ENCODE measurements at regions of chr12 and their contacts with region 1.

Region 1: DNA sequence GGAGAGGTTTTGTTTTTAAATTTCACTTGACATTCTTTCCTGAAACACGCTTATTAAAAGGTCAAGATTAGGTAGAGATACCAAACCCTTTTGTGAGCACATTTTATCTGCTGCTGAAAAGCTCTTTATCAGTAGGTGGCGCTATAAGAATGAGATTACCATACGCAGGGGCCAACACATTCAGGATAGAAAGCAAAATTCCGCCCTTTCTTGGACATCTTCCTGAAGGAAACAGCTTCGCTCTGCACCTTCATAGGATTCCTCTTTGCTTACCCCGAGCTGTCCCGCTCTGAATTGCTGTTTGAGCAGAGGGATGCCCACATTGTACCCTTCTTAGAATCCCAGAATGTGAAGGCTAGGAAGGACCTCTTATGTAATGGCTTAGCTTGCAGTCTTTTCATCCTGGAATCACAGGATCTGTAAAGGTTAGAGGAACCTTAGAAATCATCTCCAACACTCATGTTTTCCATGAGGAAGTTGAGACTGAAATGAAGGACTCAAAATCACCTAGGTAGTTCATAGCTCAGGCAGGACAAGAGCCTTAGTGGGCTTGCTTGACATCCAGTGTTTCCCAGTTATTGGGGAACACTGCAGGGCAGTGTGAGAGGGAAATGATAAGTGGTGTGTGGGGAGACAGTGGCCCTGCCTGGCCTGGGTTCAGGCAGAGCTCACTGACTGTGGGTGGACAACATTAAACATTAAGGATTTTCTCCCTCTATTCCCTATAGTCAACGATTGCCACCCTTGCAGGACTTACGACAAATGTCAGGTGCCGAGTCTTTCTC is 38.7 kb upstream of the CRY1 start:
- DNase-seq: peak; percentile 4
- H3K4me3 ChIP-seq: no peak overlapping the region
- CTCF ChIP-seq: peak; percentile 67

Region 2: DNA sequence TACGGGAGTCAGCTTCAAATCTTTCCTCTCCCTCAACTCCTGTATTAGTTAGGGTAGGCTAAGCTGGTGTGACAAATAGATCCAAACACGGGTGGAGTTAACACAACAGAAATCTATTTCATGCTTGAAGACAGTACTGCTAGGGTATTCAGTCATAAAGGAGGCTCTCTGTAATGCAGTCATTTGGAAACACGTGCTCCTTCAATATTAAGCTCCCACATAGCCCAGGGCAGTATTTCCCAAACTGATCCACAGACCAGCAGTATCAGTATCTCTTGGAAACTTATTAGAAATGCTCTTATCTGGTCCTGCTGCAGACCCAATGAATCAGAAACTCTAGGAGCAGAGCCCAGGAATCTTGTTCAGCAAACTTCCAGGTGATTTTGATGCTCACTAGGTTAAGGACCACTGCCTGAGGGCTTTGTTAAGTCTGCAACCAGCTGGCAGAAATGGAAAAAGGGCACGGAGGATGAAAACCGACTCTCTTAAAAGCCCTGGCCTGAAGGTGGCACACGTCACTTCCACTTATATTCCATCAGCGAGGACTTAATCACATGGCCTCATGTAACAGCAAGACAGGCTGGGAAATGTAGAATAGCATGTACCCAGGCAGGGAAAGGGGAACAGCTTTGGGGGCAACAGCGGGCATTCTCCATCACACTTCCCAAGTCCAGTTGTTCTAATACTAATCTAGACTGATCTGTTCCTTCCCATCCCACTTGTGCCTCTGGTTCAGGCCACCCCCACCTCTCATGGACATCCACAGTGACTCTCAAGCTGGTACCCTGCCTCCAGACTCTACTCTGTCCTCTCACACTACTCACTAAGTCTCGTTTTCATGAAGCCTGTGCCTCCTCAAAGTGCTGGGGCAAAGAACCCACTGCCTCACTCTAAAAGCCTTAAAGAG is 395.7 kb before region 1 on chr12:
- CTCF ChIA-PET with region 1: no interaction called
- POLR2A ChIA-PET with region 1: no interaction called
- DNase-seq: no peak
- H3K4me3 ChIP-seq: no peak overlapping the region
- CTCF ChIP-seq: no peak

Region 3: GRCh38 chr12:107105410-107105703 is 26.7 kb before region 1 on chr12:
- CTCF ChIA-PET with region 1: interaction called, 23 read pairs
- POLR2A ChIA-PET with region 1: no interaction called
- DNase-seq: no peak
- H3K4me3 ChIP-seq: no peak overlapping the region
- CTCF ChIP-seq: no peak

Region 4: GRCh38 chr12:107145397-107145796 is 13.4 kb after region 1 on chr12:
- CTCF ChIA-PET with region 1: interaction called, 47 read pairs
- POLR2A ChIA-PET with region 1: no interaction called
- DNase-seq: no peak
- H3K4me3 ChIP-seq: no peak overlapping the region
- CTCF ChIP-seq: no peak

Region 5: DNA sequence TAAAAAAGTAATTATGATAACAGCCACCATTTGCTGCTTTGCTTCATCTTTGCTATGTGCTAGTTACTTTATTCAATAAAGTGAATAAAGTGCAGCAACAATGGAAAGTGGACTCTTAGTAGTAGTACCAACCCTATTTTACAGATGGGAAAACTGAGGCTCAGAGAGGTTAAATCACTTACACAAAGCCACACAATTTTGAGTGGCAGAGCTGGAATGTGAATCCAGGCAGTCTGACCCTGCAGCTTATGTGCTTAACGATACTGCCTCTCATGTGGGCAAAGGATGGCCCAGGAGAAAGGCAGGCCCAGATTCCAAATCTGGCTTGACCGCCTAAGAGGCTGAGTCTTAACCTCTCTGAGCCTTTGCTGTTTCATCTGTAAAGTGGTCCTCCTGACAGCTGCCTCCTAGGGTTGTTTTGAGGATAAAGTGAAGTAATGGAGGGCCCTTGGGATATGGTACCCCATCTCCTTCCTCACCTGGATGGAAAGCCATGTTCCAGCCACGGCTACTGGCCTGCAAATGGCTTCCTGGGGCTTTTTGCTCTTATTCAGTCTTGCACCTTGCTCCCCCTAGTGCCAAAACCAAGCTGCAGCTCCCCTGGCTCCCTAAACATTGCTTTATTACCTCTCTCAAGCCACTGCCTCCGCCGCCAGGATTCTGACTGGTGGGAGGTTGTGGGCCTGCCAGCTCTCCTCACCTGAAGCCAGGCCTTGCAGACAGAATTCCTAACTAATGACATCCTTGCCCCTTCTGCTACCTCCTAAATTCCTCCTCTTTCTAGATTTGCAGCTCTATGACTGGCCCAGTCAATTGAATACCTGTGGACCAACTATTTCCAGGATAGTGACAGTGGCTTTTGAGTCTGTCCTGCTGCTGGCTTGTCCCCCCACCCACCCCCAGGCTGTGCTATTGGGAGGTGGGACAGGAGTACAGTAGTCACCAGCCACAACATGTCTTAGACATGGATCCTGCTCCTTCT is 270.3 kb after region 1 on chr12:
- CTCF ChIA-PET with region 1: interaction called, 403 read pairs
- POLR2A ChIA-PET with region 1: no interaction called
- DNase-seq: no peak
- H3K4me3 ChIP-seq: no peak overlapping the region
- CTCF ChIP-seq: peak; percentile 74

Region 6: DNA sequence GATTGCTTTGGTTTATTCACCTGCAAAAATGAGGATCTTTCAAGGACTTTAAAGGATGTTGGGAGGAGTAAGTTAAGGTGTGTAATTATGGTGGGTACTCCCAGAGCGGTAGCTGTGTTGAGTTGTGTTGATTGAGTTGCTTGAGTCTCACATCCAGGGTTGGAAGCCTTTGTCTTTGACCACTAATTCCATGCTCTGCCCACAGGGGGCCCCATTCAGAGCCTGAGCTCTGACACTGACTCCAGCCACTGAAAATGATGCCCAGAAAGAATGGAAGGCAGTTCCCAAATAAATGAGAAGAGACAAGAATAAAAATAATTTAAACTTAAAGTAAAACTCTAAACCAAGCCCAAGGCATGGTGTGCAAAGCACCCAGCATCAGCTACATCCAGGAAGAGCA is 316.2 kb after region 1 on chr12:
- CTCF ChIA-PET with region 1: interaction called, 12 read pairs
- POLR2A ChIA-PET with region 1: no interaction called
- DNase-seq: no peak
- H3K4me3 ChIP-seq: no peak overlapping the region
- CTCF ChIP-seq: peak; percentile 36

Region 7: GRCh38 chr12:107593713-107594381 is 461.8 kb after region 1 on chr12:
- CTCF ChIA-PET with region 1: interaction called, 24 read pairs
- POLR2A ChIA-PET with region 1: no interaction called
- DNase-seq: no peak
- H3K4me3 ChIP-seq: no peak overlapping the region
- CTCF ChIP-seq: no peak

Region 8: DNA sequence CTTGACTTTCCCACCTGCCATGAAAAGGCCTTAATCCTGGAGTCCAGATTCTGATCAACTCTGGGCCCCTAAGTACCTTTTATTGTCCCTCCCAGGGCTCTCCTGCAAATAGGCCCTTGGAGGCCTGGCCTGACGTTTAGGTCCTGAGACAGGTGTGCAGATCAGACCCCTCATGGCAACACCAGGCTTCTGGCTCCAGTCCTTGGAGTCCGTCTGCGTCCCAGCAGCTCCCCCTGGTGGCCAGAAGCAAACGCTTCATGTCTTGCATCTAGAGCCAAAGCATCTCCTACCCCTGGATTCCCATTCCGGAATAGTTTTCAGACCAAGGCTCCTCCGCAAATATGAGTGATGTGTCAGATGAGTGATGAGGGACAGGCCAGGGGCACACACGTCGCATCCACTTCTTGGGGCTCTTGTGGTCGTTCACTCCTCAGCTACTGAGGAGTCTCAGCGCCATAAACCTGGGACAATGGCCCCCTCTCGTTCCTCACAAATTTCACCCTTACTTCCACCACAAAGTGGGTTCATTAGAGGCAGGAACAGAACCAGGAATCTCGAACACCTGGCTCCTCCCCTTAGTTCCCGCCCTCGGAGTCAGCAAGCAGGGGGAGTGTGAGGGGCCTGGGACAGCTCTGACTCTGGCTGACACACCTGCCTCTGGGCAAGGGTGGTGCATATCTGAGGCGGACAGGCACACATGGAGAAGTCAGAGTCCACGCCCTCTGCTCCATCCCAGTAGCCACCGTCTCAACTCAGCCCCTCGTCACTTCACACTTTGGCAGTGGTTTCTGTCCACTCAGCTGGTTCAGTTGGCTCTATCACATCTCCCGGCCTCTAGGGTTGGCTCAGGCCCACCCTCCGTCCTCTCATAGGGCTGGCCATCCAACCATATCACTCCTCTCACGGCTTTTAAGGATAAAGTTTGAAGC is 475.7 kb after region 1 on chr12:
- CTCF ChIA-PET with region 1: interaction called, 1,069 read pairs
- POLR2A ChIA-PET with region 1: no interaction called
- DNase-seq: no peak
- H3K4me3 ChIP-seq: no peak overlapping the region
- CTCF ChIP-seq: peak; percentile 89

Measured in AG04449 (cell line).